CD4-positive, alpha-beta T cell (primary cell): ENCODE measurements at regions of chr10 and their contacts with region 1.

Region 1: GRCh38 chr10:11472158-11472753 is 139.2 kb downstream of the USP6NL start:
- DNase-seq: peak; percentile 52 to 82 (median 68)
- ATAC-seq: peak; percentile 98
- H3K4me3 ChIP-seq: no peak overlapping the region
- H3K4me3 Mint-ChIP-seq: no peak overlapping the region
- H3K27ac ChIP-seq: no peak overlapping the region
- H3K27ac Mint-ChIP-seq: no peak overlapping the region
- H3K4me1 ChIP-seq: peaks cover 3% of the 10 kb centered on the region
- H3K4me1 Mint-ChIP-seq: no peaks in the 10 kb centered on the region
- H3K27me3 ChIP-seq: no peaks in the 10 kb centered on the region
- H3K27me3 Mint-ChIP-seq: no peaks in the 10 kb centered on the region
- CTCF ChIP-seq: peak; percentile 95

Region 2: GRCh38 chr10:11113156-11113555 is 359.1 kb before region 1 on chr10:
- CTCF ChIA-PET with region 1: no interaction called
- POLR2A ChIA-PET with region 1: no interaction called
- intact Hi-C with region 1: loop called (anchors 1 to 10 kb)
- DNase-seq: peak in 9 of 14 experiments; percentile 13 to 79 (median 26)
- ATAC-seq: peak; percentile 96
- H3K4me3 ChIP-seq: no peak overlapping the region
- H3K4me3 Mint-ChIP-seq: peak overlapping the region; percentile 52
- H3K27ac ChIP-seq: no peak overlapping the region
- H3K27ac Mint-ChIP-seq: peak overlapping the region; percentile 68
- H3K4me1 ChIP-seq: peaks cover 7% of the 10 kb centered on the region
- H3K4me1 Mint-ChIP-seq: peaks cover 49% of the 10 kb centered on the region
- H3K27me3 ChIP-seq: no peaks in the 10 kb centered on the region
- H3K27me3 Mint-ChIP-seq: no peaks in the 10 kb centered on the region
- CTCF ChIP-seq: peak; percentile 77

Region 3: DNA sequence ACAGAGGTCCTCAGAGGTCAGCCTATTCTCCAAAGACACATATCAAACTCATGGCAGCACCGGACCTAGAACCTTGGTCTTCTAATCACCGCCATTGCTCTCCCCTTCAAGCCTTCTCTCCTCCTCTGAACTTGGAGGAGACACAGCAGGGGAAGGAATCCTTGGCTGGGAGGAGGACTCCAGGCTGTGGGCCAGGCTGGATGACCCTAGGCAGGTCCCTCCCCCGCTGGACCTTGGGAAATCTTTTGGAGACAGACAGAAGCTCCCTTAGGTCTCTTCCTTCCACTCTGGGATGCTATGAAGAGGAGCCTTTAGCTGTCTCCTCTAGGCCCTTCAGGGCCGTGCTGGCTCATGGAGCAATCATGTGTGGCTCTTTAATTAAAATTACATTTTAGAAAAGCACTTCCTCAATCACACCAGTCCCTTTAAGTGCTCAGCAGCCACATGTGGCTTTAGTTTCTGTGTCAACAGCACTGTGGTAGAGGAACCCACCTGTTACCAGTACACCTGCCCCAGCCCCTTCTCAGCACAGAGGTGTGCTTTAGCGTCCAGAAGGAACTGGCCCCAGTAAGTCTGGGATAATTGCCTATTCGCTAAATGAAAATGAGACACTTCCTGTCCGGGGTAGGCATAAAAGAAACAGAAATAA is 216.3 kb before region 1 on chr10:
- CTCF ChIA-PET with region 1: no interaction called
- POLR2A ChIA-PET with region 1: no interaction called
- intact Hi-C with region 1: loop called in 1 of 2 experiments (anchors 10 kb)
- DNase-seq: no peak
- ATAC-seq: no peak
- H3K4me3 ChIP-seq: no peak overlapping the region
- H3K4me3 Mint-ChIP-seq: no peak overlapping the region
- H3K27ac ChIP-seq: peak overlapping the region in 1 of 2 donors; percentile 26
- H3K27ac Mint-ChIP-seq: peak overlapping the region; percentile 93
- H3K4me1 ChIP-seq: peaks cover 32% of the 10 kb centered on the region
- H3K4me1 Mint-ChIP-seq: peaks cover 89% of the 10 kb centered on the region
- H3K27me3 ChIP-seq: no peaks in the 10 kb centered on the region
- H3K27me3 Mint-ChIP-seq: no peaks in the 10 kb centered on the region
- CTCF ChIP-seq: no peak

Region 4: GRCh38 chr10:11270135-11270857 is 202.0 kb before region 1 on chr10:
- CTCF ChIA-PET with region 1: no interaction called
- POLR2A ChIA-PET with region 1: no interaction called
- intact Hi-C with region 1: loop called (anchors 10 kb)
- DNase-seq: peak; percentile 56 to 82 (median 66)
- ATAC-seq: peak; percentile 75
- H3K4me3 ChIP-seq: no peak overlapping the region
- H3K4me3 Mint-ChIP-seq: peak overlapping the region; percentile 35
- H3K27ac ChIP-seq: peak overlapping the region in 1 of 2 donors; percentile 29
- H3K27ac Mint-ChIP-seq: peak overlapping the region; percentile 93
- H3K4me1 ChIP-seq: peaks cover 19% of the 10 kb centered on the region
- H3K4me1 Mint-ChIP-seq: peaks cover 78% of the 10 kb centered on the region
- H3K27me3 ChIP-seq: no peaks in the 10 kb centered on the region
- H3K27me3 Mint-ChIP-seq: no peaks in the 10 kb centered on the region
- CTCF ChIP-seq: peak; percentile 79

Region 5: GRCh38 chr10:11318826-11319599 is 153.2 kb before region 1 on chr10:
- CTCF ChIA-PET with region 1: no interaction called
- POLR2A ChIA-PET with region 1: no interaction called
- intact Hi-C with region 1: no loop called
- DNase-seq: no peak
- ATAC-seq: no peak
- H3K4me3 ChIP-seq: no peak overlapping the region
- H3K4me3 Mint-ChIP-seq: no peak overlapping the region
- H3K27ac ChIP-seq: no peak overlapping the region
- H3K27ac Mint-ChIP-seq: peak overlapping the region; percentile 70
- H3K4me1 ChIP-seq: peaks cover 46% of the 10 kb centered on the region
- H3K4me1 Mint-ChIP-seq: peaks cover 77% of the 10 kb centered on the region
- H3K27me3 ChIP-seq: no peaks in the 10 kb centered on the region
- H3K27me3 Mint-ChIP-seq: no peaks in the 10 kb centered on the region
- CTCF ChIP-seq: no peak

Region 6: GRCh38 chr10:11330383-11331045 is 141.7 kb before region 1 on chr10:
- CTCF ChIA-PET with region 1: no interaction called
- POLR2A ChIA-PET with region 1: interaction called, 3 read pairs
- intact Hi-C with region 1: loop called in 1 of 2 experiments (anchors 5 kb)
- DNase-seq: no peak
- ATAC-seq: no peak
- H3K4me3 ChIP-seq: no peak overlapping the region
- H3K4me3 Mint-ChIP-seq: no peak overlapping the region
- H3K27ac ChIP-seq: no peak overlapping the region
- H3K27ac Mint-ChIP-seq: peak overlapping the region; percentile 92
- H3K4me1 ChIP-seq: peaks cover 10% of the 10 kb centered on the region
- H3K4me1 Mint-ChIP-seq: peaks cover 83% of the 10 kb centered on the region
- H3K27me3 ChIP-seq: no peaks in the 10 kb centered on the region
- H3K27me3 Mint-ChIP-seq: no peaks in the 10 kb centered on the region
- CTCF ChIP-seq: no peak

Region 7: GRCh38 chr10:11515596-11516430 is 43.6 kb after region 1 on chr10:
- CTCF ChIA-PET with region 1: no interaction called
- POLR2A ChIA-PET with region 1: no interaction called
- intact Hi-C with region 1: no loop called
- DNase-seq: peak; percentile 11 to 80 (median 28)
- ATAC-seq: peak; percentile 78
- H3K4me3 ChIP-seq: no peak overlapping the region
- H3K4me3 Mint-ChIP-seq: no peak overlapping the region
- H3K27ac ChIP-seq: no peak overlapping the region
- H3K27ac Mint-ChIP-seq: no peak overlapping the region
- H3K4me1 ChIP-seq: no peaks in the 10 kb centered on the region
- H3K4me1 Mint-ChIP-seq: peaks cover 4% of the 10 kb centered on the region
- H3K27me3 ChIP-seq: no peaks in the 10 kb centered on the region
- H3K27me3 Mint-ChIP-seq: no peaks in the 10 kb centered on the region
- CTCF ChIP-seq: peak; percentile 76